PC-9 (cell line): ENCODE measurements at regions of chr10 and their contacts with region 1.

Region 1: GRCh38 chr10:62038609-62039190 is 137.2 kb downstream of the ARID5B start:
- DNase-seq: peak; percentile 76 to 79
- H3K4me3 ChIP-seq: no peak overlapping the region
- H3K27ac ChIP-seq: peak overlapping the region; percentile 57
- H3K4me1 ChIP-seq: peaks cover 35% of the 10 kb centered on the region
- H3K27me3 ChIP-seq: no peaks in the 10 kb centered on the region
- CTCF ChIP-seq: peak; percentile 90

Region 2: GRCh38 chr10:61271127-61271823 is 767.4 kb before region 1 on chr10:
- CTCF ChIA-PET with region 1: no interaction called
- POLR2A ChIA-PET with region 1: no interaction called
- intact Hi-C with region 1: loop called (anchors 10 kb)
- DNase-seq: peak in 1 of 2 experiments; percentile 84
- H3K4me3 ChIP-seq: no peak overlapping the region
- H3K27ac ChIP-seq: no peak overlapping the region
- H3K4me1 ChIP-seq: peaks cover 10% of the 10 kb centered on the region; the same call in 1 of the 2 replicates
- H3K27me3 ChIP-seq: no peaks in the 10 kb centered on the region
- CTCF ChIP-seq: peak; percentile 55

Region 3: DNA sequence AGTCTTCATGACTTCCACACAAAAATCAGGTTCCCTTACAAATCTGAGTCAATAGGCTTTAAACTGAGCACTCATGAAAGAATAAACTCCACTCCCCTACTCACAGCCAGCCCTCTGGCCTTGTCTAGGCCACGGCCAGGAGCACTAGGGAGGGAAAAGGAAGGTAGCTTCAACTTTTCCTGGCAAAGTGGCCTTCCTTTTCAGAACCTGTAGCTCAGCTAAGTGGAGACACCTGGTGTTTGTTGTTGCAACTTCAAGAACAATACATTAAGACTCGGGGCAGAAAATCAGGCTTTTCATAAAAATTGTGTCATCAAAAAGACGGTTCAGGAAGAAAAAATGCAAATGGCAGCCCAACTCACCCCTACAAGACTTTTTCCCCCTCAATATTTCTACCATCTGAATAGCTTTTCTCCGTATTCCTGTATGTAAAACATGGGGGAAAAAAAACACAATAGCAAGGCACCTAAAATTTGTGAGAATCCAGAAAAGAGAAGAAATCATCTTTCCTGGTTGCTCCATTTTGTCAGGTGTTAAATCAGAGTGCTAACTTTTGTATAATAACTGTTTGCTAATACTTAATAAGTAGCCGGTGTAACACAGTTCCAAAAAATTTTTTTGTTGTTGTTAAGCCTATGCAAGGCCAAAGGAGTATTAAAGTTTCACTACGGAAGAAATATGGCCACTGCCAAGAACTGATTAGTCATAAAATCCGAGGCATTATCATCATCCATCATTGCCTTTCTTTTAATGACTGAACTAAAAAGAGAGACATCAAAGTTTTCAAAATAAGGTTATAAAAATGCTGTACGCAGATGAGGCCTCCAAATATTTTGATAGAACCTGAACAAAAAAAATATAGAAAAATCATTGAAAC is 203.4 kb before region 1 on chr10:
- CTCF ChIA-PET with region 1: no interaction called
- POLR2A ChIA-PET with region 1: no interaction called
- intact Hi-C with region 1: loop called (anchors 1 kb)
- DNase-seq: no peak
- H3K4me3 ChIP-seq: no peak overlapping the region
- H3K27ac ChIP-seq: peak overlapping the region; percentile 70
- H3K4me1 ChIP-seq: peaks cover 69% of the 10 kb centered on the region
- H3K27me3 ChIP-seq: no peaks in the 10 kb centered on the region
- CTCF ChIP-seq: peak; percentile 59; the same call in 1 of the 2 replicates

Region 4: GRCh38 chr10:61912981-61913380 is 125.7 kb before region 1 on chr10:
- CTCF ChIA-PET with region 1: no interaction called
- POLR2A ChIA-PET with region 1: no interaction called
- intact Hi-C with region 1: no loop called
- DNase-seq: no peak
- H3K4me3 ChIP-seq: no peak overlapping the region
- H3K27ac ChIP-seq: no peak overlapping the region
- H3K4me1 ChIP-seq: no peaks in the 10 kb centered on the region
- H3K27me3 ChIP-seq: no peaks in the 10 kb centered on the region
- CTCF ChIP-seq: no peak

Region 5: DNA sequence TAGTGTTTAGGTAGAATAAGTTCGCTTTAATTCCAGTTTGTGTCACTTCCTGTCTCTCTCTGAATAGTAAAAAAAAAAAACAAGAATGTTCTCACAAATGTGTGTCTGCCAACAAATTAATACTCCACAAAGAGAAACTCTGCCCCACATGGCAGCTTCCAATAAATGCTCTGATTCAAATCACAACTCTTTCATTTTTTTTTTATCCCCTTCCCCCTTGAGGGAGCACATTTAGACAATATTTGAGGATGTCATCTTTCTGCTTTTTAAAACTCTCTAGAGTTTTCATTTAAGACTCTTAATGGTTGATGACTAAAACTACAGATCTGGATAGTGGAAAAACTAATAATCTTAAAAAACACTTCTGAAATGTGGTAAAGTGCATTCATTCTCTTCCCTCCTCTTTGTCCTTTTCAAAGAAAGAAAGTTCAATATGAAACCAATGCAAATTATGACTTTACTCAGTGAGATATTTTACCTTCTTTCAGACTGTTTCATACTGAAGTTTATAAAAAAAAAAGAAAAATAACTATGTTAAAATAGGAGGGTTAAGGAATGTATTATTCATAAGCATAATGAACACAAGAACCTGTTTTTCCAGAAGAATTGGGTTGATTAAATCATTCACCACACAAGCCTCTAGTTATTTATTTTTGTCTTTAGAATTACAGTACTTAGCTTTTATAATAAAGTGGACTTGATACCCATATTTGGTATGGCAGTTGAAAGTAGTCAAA is 94.9 kb before region 1 on chr10:
- CTCF ChIA-PET with region 1: no interaction called
- POLR2A ChIA-PET with region 1: no interaction called
- intact Hi-C with region 1: loop called (anchors 1 kb)
- DNase-seq: peak; percentile 7 to 88
- H3K4me3 ChIP-seq: peak overlapping the region; percentile 37; the same call in 1 of the 2 replicates
- H3K27ac ChIP-seq: peak overlapping the region; percentile 83
- H3K4me1 ChIP-seq: peaks cover 53% of the 10 kb centered on the region
- H3K27me3 ChIP-seq: no peaks in the 10 kb centered on the region
- CTCF ChIP-seq: no peak

Region 6: DNA sequence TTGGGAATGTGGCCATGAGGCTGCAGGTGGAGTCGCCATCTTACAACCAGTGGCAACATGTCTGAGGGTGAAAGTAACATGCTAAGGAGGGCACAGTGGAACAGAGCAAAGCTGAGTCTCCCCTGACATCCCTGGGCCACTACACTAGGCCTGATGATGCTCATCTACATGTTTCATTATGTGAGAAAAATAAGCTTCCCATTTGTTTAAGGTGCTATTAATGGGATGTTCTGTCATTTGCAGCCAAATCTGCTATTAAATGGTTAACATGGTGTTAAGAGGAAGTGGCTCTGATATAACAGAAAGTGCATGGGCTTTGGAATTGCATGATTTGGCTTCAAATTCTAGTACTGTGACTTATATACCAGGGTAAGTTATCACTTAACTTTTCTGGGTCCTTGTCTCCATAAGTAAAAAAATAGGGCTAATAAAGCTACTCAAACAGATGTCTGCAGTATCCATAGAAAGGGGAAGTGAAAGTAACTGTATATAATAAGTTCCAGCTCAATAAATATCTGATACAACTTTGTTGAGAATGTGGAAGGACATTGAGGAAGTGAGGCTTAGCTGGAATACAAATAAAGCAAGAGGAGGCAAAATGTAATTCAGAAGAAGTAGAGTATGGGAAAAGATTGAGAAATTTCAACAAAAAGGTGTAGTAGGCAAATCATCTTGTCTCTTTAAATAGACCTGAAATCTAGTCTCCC is 71.0 kb after region 1 on chr10:
- CTCF ChIA-PET with region 1: interaction called, 4 read pairs
- POLR2A ChIA-PET with region 1: no interaction called
- intact Hi-C with region 1: loop called (anchors 1 kb)
- DNase-seq: no peak
- H3K4me3 ChIP-seq: no peak overlapping the region
- H3K27ac ChIP-seq: peak overlapping the region; percentile 49
- H3K4me1 ChIP-seq: peaks cover 80% of the 10 kb centered on the region
- H3K27me3 ChIP-seq: no peaks in the 10 kb centered on the region
- CTCF ChIP-seq: no peak

Region 7: GRCh38 chr10:62437696-62438095 is 399.0 kb after region 1 on chr10:
- CTCF ChIA-PET with region 1: no interaction called
- POLR2A ChIA-PET with region 1: no interaction called
- intact Hi-C with region 1: loop called (anchors 1 kb)
- DNase-seq: peak in 1 of 2 experiments; percentile 67
- H3K4me3 ChIP-seq: no peak overlapping the region
- H3K27ac ChIP-seq: no peak overlapping the region
- H3K4me1 ChIP-seq: peaks cover 17% of the 10 kb centered on the region
- H3K27me3 ChIP-seq: no peaks in the 10 kb centered on the region
- CTCF ChIP-seq: peak; percentile 95

Region 8: DNA sequence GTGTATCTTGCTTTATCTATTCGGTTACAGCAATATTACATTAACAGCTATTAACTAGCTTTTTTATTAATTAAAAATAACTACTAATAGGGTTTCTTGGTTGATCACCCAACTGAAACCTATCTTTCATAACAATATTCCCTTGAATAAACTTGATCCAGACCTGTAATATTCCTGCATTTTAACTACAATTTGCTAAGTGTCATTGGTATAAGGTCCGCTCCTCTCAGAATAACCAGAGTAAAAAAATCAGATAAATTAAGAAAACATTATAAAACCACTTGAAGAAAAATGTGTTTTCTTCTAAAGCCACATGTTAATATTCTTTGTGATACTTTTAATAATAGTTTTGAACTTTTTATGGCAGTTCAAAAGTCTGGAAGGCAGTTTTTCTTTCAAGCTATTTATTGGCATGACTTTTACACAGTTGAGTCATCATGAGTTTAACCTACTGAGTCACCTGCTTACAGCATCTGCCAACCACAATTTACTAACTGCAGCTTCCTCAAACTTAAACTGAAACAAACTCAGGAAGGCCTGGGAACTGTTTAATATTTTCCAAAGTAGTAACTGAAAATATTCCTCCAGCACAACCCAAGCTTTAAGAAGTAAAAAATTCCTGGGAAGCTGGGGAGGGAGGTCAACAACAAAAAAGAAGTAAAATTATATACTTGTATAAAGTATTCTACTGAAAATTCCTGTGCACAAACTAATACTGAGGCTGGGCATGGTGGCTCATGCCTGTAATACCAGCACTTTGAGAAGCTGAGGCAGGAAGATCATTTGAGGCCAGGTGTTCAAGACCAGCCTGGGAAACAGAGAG is 1197.6 kb after region 1 on chr10:
- CTCF ChIA-PET with region 1: no interaction called
- POLR2A ChIA-PET with region 1: interaction called, 10 read pairs
- intact Hi-C with region 1: no loop called
- DNase-seq: peak; percentile 22 to 91
- H3K4me3 ChIP-seq: no peak overlapping the region
- H3K27ac ChIP-seq: peak overlapping the region; percentile 93
- H3K4me1 ChIP-seq: peaks cover 40% of the 10 kb centered on the region
- H3K27me3 ChIP-seq: no peaks in the 10 kb centered on the region
- CTCF ChIP-seq: no peak